ENCODE measurements at regions of chr7 and their contacts with region 1.

Region 1: GRCh38 chr7:43750016-43750887 is 8.2 kb upstream of the BLVRA start:
- DNase-seq: no peak
- ATAC-seq: peak in 3 of 8 donors; percentile 47 to 50 (median 47)
- H3K4me3 ChIP-seq: no peak overlapping the region
- H3K27ac ChIP-seq: no peak overlapping the region
- H3K4me1 ChIP-seq: peaks cover 0 to 33% (median 0%) of the 10 kb centered on the region in 9 donors
- H3K27me3 ChIP-seq: peaks cover 0 to 5% (median 0%) of the 10 kb centered on the region in 7 donors
- CTCF ChIP-seq: no peak

Region 2: GRCh38 chr7:43151076-43151475 is 599.2 kb before region 1 on chr7:
- intact Hi-C with region 1: loop called in 1 of 10 experiments (anchors 5 kb)
- DNase-seq: no peak
- ATAC-seq: no peak
- H3K4me3 ChIP-seq: no peak overlapping the region
- H3K27ac ChIP-seq: no peak overlapping the region
- H3K4me1 ChIP-seq: no peaks in the 10 kb centered on the region
- H3K27me3 ChIP-seq: peaks cover 0 to 28% (median 5%) of the 10 kb centered on the region in 7 donors
- CTCF ChIP-seq: no peak